ENCODE measurements at regions of chr10 and their contacts with region 1.

Region 1: GRCh38 chr10:11757821-11758463 is 15.8 kb downstream of the ECHDC3 start:
- DNase-seq: peak; percentile 86
- H3K4me3 ChIP-seq: peak overlapping the region in 1 of 2 experiments; percentile 38; a peak in 1 of 4 replicates
- H3K27ac ChIP-seq: peak overlapping the region; percentile 25 to 32; a peak in 3 of 4 replicates
- H3K4me1 ChIP-seq: peaks cover 10 to 13% of the 10 kb centered on the region in 2 experiments; a peak in 2 of 4 replicates
- H3K27me3 ChIP-seq: no peaks in the 10 kb centered on the region
- CTCF ChIP-seq: peak; percentile 92
- EP300 ChIP-seq: no peak
- RAD21 ChIP-seq: peak; percentile 90

Region 2: GRCh38 chr10:11515596-11516430 is 242.1 kb before region 1 on chr10:
- CTCF ChIA-PET with region 1: interaction called, 55 read pairs
- POLR2A ChIA-PET with region 1: no interaction called
- DNase-seq: peak; percentile 55
- H3K4me3 ChIP-seq: no peak overlapping the region; a peak in 1 of 4 replicates
- H3K27ac ChIP-seq: no peak overlapping the region
- H3K4me1 ChIP-seq: peaks cover under 1 to 11% of the 10 kb centered on the region in 2 experiments; a peak in 3 of 4 replicates
- H3K27me3 ChIP-seq: no peaks in the 10 kb centered on the region
- CTCF ChIP-seq: peak; percentile 91
- EP300 ChIP-seq: no peak
- RAD21 ChIP-seq: peak; percentile 98

Region 3: GRCh38 chr10:11610166-11610825 is 147.6 kb before region 1 on chr10:
- CTCF ChIA-PET with region 1: interaction called, 10 read pairs
- POLR2A ChIA-PET with region 1: no interaction called
- DNase-seq: no peak
- H3K4me3 ChIP-seq: peak overlapping the region; percentile 87 to 99
- H3K27ac ChIP-seq: peak overlapping the region in 1 of 2 experiments; percentile 86; a peak in 1 of 4 replicates
- H3K4me1 ChIP-seq: peaks cover 10 to 16% of the 10 kb centered on the region in 2 experiments
- H3K27me3 ChIP-seq: no peaks in the 10 kb centered on the region
- CTCF ChIP-seq: no peak
- EP300 ChIP-seq: no peak
- RAD21 ChIP-seq: no peak

Region 4: GRCh38 chr10:11742779-11743298 is 15.1 kb before region 1 on chr10:
- CTCF ChIA-PET with region 1: interaction called, 43 read pairs
- POLR2A ChIA-PET with region 1: no interaction called
- DNase-seq: no peak
- H3K4me3 ChIP-seq: peak overlapping the region; percentile 60 to 68
- H3K27ac ChIP-seq: no peak overlapping the region
- H3K4me1 ChIP-seq: peaks cover 0 to 14% of the 10 kb centered on the region in 2 experiments; a peak in 1 of 4 replicates
- H3K27me3 ChIP-seq: no peaks in the 10 kb centered on the region
- CTCF ChIP-seq: no peak
- EP300 ChIP-seq: no peak
- RAD21 ChIP-seq: no peak